ENCODE measurements at regions of chr11 and their contacts with region 1.

Region 1: DNA sequence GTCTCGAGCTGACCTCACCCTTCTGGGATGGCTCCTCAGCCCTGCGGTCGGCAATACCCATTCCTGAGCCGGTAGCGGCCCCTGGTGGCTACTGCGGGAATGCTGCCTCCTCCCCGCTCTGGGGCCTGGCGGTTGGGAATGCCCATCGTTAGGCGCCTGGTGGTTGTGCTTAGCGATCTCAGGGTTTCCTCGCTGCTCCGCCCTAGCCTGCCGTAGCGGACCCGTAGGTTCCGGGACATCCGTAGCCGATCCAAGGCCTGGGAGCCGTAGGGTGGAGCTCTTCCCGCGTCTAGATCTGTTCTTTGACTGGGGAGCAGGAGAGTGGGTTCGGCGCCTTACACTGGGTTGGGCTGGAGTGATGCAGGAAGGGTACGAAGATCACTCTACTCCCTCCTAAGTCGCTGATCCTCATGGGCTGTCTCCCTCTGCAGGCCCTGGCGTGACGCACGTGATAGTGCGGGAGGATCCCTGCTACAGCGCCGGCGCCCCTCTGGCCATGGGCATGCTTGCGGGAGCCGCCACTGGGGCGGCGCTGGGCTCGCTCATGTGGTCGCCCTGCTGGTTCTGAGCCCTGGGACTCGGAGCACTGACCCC is 14.8 kb downstream of the PLEKHB1 start:
- DNase-seq: peak; percentile 97
- H3K4me3 ChIP-seq: peak overlapping the region; percentile 35 to 51; a peak in 3 of 4 replicates
- H3K27ac ChIP-seq: no peak overlapping the region
- H3K4me1 ChIP-seq: peaks cover 0 to 6% of the 10 kb centered on the region in 2 experiments; a peak in 1 of 4 replicates
- H3K27me3 ChIP-seq: no peaks in the 10 kb centered on the region
- CTCF ChIP-seq: peak; percentile 94
- EP300 ChIP-seq: no peak
- RAD21 ChIP-seq: peak; percentile 99

Region 2: DNA sequence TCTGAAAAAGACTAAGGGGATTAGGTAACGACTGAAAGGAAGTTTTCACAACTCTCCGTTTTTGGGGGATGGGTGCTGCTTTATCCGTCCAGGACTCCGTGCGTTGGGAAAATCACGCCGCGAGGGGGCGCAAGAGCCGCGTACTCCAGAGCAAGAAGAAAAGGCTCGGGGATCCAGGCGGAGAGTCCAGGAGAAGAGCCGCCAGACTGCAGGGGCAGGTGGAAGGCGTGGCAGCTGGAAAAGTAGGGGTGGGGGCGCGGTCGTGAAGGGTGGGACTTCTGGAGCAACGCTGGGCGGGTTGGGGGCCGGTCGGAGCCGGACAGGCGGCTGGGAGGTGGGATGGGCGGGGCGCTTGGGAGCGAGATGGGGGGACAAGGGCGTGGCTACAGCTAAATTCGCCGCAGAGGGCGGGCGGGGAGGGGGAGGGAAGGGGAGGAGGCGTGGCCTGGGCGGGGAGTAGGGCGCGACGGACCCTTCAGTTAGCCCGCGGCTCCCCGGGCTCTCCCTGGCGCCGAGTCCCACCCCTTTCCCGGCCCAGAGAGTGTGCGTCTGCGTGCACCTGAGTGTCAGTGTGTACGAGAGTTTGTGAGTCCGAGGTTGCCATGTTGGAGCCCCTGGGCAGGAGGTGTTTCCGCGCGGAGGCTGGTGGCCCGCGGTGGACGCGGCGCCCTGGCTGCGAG is 353.7 kb before region 1 on chr11:
- CTCF ChIA-PET with region 1: interaction called, 10 read pairs
- POLR2A ChIA-PET with region 1: no interaction called
- DNase-seq: peak; percentile 97
- H3K4me3 ChIP-seq: peak overlapping the region; percentile 76 to 86
- H3K27ac ChIP-seq: peak overlapping the region; percentile 93 to 97
- H3K4me1 ChIP-seq: peaks cover 35 to 40% of the 10 kb centered on the region in 2 experiments
- H3K27me3 ChIP-seq: no peaks in the 10 kb centered on the region
- CTCF ChIP-seq: peak; percentile 90
- EP300 ChIP-seq: peak in 1 of 2 experiments; percentile 39; a peak in 1 of 4 replicates
- RAD21 ChIP-seq: peak; percentile 96

Region 3: GRCh38 chr11:73376160-73376802 is 284.9 kb before region 1 on chr11 and contains the start of gene RELT:
- CTCF ChIA-PET with region 1: interaction called, 16 read pairs
- POLR2A ChIA-PET with region 1: no interaction called
- DNase-seq: peak; percentile 99
- H3K4me3 ChIP-seq: peak within 1 kb of the TSS; percentile 67 to 87
- H3K27ac ChIP-seq: peak within 1 kb of the TSS; percentile 64 to 71
- H3K4me1 ChIP-seq: peaks cover 3 to 19% of the 10 kb centered on the region in 2 experiments; a peak in 1 of 4 replicates
- H3K27me3 ChIP-seq: no peaks in the 10 kb centered on the region
- CTCF ChIP-seq: peak; percentile 73
- EP300 ChIP-seq: no peak
- RAD21 ChIP-seq: peak; percentile 53
- polyA plus RNA-seq, gene RELT: 4.3 and 5.5 TPM in 2 replicates

Region 4: GRCh38 chr11:73414977-73415651 is 246.0 kb before region 1 on chr11:
- CTCF ChIA-PET with region 1: interaction called, 24 read pairs
- POLR2A ChIA-PET with region 1: no interaction called
- DNase-seq: no peak
- H3K4me3 ChIP-seq: no peak overlapping the region
- H3K27ac ChIP-seq: peak overlapping the region; percentile 50 to 83; a peak in 3 of 4 replicates
- H3K4me1 ChIP-seq: peaks cover 9 to 28% of the 10 kb centered on the region in 2 experiments
- H3K27me3 ChIP-seq: no peaks in the 10 kb centered on the region
- CTCF ChIP-seq: no peak
- EP300 ChIP-seq: no peak
- RAD21 ChIP-seq: no peak

Region 5: DNA sequence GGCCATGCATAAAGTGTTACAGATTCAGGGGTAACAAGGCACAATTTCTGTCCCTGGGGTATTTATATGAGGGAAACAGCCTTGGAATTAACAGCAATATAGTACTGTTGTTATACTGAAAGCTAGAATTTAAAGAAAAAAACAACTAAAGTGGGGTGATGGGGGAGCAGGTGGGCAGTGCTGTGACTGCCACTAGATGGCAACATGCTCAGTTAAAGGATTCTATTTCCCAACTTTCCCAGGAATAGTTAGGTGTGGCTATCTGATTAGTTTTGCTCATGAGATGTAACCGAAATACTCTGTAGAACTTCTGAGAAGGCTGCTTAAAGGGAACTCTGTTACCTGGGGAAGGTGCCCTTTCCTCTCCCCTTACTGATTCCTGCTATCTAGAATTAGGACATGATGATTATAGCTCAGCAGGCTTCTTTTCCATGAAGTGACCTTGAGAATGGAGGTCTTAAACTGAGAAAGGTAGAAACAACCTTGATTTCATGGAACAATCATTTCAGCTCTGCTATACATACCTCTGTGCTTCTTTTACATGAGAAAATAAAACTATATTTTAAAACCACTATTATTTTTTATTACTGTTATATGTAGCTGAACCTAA is 182.3 kb before region 1 on chr11:
- CTCF ChIA-PET with region 1: interaction called, 58 read pairs
- POLR2A ChIA-PET with region 1: no interaction called
- DNase-seq: peak; percentile 45
- H3K4me3 ChIP-seq: peak overlapping the region in 1 of 2 experiments; percentile 12; a peak in 1 of 4 replicates
- H3K27ac ChIP-seq: no peak overlapping the region
- H3K4me1 ChIP-seq: peaks cover 0 to 2% of the 10 kb centered on the region in 2 experiments; a peak in 2 of 4 replicates
- H3K27me3 ChIP-seq: no peaks in the 10 kb centered on the region
- CTCF ChIP-seq: peak; percentile 84
- EP300 ChIP-seq: no peak
- RAD21 ChIP-seq: peak; percentile 77

Region 6: DNA sequence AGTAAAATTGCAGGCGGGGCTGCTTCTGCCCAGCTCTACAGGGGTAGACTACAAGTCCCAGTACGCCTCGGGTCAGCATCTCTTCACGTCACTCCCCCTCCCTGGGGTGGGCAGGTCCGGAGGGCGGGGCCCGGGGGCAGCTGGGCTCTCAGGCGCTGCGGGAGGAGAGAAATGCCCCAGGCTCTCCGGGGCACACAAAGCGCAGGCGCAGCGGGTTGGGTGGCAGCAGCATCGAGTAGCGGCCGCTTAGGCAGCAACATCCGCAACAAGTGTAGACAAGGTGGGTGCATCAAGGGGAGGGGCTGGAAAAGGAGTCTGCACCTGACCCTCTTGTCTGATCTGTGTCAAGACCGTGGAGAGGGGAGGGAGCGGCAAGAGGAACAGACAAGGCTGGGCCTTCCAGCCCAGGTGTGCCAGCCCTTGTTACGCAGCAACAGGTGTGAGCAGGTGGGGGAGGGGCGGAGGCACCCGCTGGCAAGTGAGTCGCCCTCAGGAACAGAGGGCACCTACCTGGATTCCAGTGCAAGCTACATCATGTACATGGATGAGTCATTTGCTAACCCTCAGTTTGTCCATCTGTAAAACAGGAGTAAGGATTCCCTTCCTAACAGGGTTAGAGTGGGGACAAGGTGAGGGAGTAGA is 13.6 kb before region 1 on chr11:
- CTCF ChIA-PET with region 1: interaction called, 45 read pairs
- POLR2A ChIA-PET with region 1: no interaction called
- DNase-seq: peak; percentile 87
- H3K4me3 ChIP-seq: peak overlapping the region in 1 of 2 experiments; percentile 20; a peak in 2 of 4 replicates
- H3K27ac ChIP-seq: no peak overlapping the region
- H3K4me1 ChIP-seq: peaks cover 0 to 7% of the 10 kb centered on the region in 2 experiments; a peak in 1 of 4 replicates
- H3K27me3 ChIP-seq: no peaks in the 10 kb centered on the region
- CTCF ChIP-seq: no peak
- EP300 ChIP-seq: no peak
- RAD21 ChIP-seq: no peak

Region 7: DNA sequence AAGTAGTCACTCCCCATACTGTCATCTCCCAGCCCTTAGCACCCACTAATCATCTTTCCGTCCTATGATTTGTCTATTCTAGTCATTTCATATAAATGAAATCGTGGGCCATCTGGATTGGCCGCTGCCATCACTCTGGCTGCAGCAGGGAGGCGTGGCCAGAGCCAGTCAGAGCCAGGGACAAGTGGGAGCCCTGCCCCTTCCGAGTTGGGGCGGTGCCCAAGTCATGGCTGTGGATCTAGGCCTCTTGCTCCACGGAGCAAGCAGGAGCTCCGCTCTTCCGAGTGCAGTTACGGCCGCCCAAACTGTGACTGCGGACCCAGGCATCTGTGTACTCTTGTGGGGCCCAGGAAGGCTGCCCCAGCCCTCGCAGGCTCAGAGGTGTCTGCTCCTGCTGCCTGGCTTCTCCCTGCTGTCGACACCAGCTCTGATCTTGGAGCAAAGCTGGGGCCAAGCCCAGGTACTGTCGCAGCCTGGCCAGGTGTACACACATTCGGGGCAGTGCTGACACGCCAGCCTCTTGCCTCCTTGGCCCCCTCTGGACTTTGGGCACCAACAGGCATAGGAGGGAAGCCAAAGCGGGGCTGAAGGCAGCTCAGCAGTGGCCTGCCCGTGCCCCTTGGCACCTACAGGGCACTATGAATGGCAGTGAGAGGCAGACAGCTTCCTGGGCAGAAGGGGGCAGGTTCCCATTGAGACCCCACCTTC is 134.9 kb after region 1 on chr11:
- CTCF ChIA-PET with region 1: no interaction called
- POLR2A ChIA-PET with region 1: no interaction called
- DNase-seq: peak; percentile 45
- H3K4me3 ChIP-seq: no peak overlapping the region
- H3K27ac ChIP-seq: no peak overlapping the region
- H3K4me1 ChIP-seq: no peaks in the 10 kb centered on the region
- H3K27me3 ChIP-seq: no peaks in the 10 kb centered on the region
- CTCF ChIP-seq: no peak
- EP300 ChIP-seq: no peak
- RAD21 ChIP-seq: no peak

Measured in SK-N-SH (cell line).